ENCODE measurements at regions of chr11 and their contacts with region 1.

Region 1: GRCh38 chr11:118198370-118198769 is 21.9 kb upstream of the SCN2B start:
- DNase-seq: peak; percentile 89
- H3K4me3 Mint-ChIP-seq: no peak overlapping the region
- H3K27ac Mint-ChIP-seq: peak overlapping the region; percentile 63
- H3K4me1 Mint-ChIP-seq: peaks cover 11% of the 10 kb centered on the region
- H3K27me3 Mint-ChIP-seq: no peaks in the 10 kb centered on the region

Region 2: GRCh38 chr11:118098996-118099837 is 99.2 kb before region 1 on chr11:
- CTCF ChIA-PET with region 1: no interaction called
- DNase-seq: no peak
- H3K4me3 Mint-ChIP-seq: no peak overlapping the region
- H3K27ac Mint-ChIP-seq: no peak overlapping the region
- H3K4me1 Mint-ChIP-seq: no peaks in the 10 kb centered on the region
- H3K27me3 Mint-ChIP-seq: peaks cover 46% of the 10 kb centered on the region

Region 3: DNA sequence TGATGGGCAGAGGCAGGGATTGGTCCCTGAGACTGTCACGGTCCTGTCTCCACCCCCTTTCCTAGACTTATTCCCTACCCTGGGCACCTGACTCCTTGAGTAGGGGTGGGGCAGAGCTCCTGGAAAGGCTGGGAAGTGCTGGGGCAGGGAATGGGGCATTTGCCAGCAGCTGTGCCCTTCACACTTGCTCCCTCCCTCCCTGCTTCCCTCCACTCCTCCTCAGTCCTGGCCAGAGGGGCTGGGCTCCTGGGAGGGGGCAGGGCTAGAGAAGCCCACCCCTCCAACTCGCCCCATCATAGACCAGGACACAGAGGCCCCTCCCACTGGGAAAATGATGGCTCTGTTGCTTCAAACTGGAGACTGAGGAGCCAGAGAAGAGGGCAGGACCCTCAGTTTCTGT is 33.5 kb before region 1 on chr11:
- CTCF ChIA-PET with region 1: no interaction called
- DNase-seq: no peak
- H3K4me3 Mint-ChIP-seq: no peak overlapping the region
- H3K27ac Mint-ChIP-seq: no peak overlapping the region
- H3K4me1 Mint-ChIP-seq: no peaks in the 10 kb centered on the region
- H3K27me3 Mint-ChIP-seq: peaks cover 91% of the 10 kb centered on the region

Region 4: DNA sequence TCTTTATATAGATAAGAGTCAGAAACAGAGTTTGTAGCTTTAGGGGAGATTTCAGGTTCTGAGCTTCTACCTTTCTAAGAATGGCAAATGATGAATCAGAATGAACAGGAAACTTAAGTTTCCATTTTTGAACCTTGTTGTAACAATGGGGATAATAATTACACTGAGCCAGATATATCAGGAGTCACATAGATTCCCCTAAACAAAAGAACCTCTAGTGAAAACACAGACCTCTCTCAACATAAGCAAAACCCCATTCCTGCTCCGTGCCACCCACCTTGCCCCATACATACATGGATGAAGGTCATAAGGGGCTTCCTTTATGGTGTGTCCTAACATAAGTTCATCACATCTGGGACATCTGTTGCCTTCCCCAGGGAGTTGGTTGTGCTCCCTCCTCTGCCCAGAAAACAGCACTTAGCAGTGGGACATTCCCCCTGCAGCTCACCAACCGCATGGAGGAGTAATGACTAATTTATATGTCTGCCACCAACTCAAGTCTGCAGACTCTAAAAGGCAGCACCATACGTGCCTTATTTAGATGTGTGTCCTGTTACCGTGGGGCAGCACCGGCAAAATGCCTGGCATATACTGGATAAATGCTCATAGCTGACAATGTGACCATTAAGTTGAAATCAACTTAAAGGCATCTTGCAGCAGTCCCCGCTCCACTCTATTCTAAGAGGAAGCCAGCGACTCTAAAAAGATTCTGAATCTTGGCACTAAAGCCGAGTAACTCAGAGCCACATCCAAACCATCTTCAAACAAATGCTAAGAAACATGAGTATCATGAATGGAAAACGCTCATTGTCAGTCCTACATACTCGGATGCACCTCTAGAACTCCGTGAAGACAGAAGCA is 18.5 kb after region 1 on chr11:
- CTCF ChIA-PET with region 1: interaction called, 23 read pairs
- DNase-seq: peak; percentile 50
- H3K4me3 Mint-ChIP-seq: peak overlapping the region; percentile 68
- H3K27ac Mint-ChIP-seq: peak overlapping the region; percentile 94
- H3K4me1 Mint-ChIP-seq: peaks cover 99% of the 10 kb centered on the region
- H3K27me3 Mint-ChIP-seq: no peaks in the 10 kb centered on the region

Region 5: GRCh38 chr11:118240999-118241768 is 42.8 kb after region 1 on chr11:
- CTCF ChIA-PET with region 1: interaction called, 17 read pairs
- DNase-seq: peak; percentile 66
- H3K4me3 Mint-ChIP-seq: peak overlapping the region; percentile 52
- H3K27ac Mint-ChIP-seq: peak overlapping the region; percentile 94
- H3K4me1 Mint-ChIP-seq: peaks cover 75% of the 10 kb centered on the region
- H3K27me3 Mint-ChIP-seq: no peaks in the 10 kb centered on the region

Region 6: DNA sequence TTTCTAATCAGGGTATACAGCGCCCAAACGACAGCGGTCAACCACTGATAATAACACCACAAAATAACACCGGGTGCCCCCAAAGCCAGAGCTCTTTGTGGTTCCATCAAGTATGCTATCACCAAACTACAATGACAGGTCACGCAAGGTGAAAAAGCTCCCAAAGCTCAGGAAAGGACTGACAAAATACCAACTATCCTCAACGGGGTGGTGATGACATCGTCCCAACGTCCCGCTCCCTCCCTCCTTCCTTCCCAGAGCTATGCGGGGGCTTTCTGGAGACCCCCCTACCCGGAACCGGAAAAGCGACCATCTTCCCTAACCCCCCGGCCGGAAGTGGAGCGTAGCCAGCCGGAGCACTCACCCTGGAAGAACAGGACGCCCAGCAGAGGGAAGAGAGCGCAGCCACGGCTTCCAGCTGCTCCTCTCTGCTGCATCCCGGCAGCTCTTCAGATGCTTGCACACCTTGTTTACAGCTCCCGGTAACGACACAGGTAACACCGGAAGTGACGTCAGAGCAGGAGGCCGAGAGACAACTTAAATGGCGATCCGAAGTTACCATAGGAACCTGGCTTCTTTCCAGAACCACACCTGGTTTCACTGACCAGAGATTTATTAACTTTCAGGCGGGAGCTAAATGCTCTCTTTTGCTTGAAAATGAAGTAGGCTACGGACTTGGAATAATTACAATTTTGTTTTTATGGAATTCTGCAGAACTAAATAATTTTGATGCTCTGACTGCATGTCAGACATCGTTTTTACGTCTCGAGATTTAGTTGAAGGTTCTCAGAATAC is 53.7 kb after region 1 on chr11 and contains the start of gene MPZL3:
- CTCF ChIA-PET with region 1: interaction called, 22 read pairs
- DNase-seq: peak; percentile 89
- H3K4me3 Mint-ChIP-seq: peak within 1 kb of the TSS; percentile 92
- H3K27ac Mint-ChIP-seq: peak within 1 kb of the TSS; percentile 95
- H3K4me1 Mint-ChIP-seq: peaks cover 36% of the 10 kb centered on the region
- H3K27me3 Mint-ChIP-seq: no peaks in the 10 kb centered on the region

Region 7: DNA sequence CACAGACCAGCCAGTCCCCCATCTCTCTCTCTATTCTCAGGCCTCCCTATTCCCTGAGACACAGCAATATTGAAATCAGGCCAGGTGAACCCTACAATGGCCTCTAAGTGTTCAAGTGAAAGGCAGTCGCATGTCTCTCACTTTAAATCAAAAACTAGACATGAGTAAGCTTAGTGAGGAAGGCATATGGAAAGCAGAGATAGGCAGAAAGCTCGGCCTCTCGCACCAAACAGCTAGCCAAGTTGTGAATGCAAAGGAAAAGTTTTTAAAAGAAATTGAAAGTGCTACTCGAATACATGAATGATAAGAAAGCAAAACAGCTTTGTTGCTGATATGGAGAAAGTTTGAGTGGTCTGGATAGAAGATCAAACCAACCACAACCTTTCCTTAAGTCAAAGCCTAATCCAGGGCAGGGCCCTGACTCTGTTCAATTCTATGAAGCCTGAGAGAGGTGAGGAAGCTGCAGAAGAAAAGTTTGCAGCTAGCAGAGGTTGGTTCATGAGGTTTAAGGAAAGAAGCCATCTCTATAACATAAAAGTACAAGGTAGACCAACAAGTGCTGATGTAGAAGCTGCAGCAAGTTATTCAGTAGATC is 85.5 kb after region 1 on chr11:
- CTCF ChIA-PET with region 1: interaction called, 35 read pairs
- DNase-seq: no peak
- H3K4me3 Mint-ChIP-seq: no peak overlapping the region
- H3K27ac Mint-ChIP-seq: peak overlapping the region; percentile 79
- H3K4me1 Mint-ChIP-seq: peaks cover 39% of the 10 kb centered on the region
- H3K27me3 Mint-ChIP-seq: no peaks in the 10 kb centered on the region

Region 8: DNA sequence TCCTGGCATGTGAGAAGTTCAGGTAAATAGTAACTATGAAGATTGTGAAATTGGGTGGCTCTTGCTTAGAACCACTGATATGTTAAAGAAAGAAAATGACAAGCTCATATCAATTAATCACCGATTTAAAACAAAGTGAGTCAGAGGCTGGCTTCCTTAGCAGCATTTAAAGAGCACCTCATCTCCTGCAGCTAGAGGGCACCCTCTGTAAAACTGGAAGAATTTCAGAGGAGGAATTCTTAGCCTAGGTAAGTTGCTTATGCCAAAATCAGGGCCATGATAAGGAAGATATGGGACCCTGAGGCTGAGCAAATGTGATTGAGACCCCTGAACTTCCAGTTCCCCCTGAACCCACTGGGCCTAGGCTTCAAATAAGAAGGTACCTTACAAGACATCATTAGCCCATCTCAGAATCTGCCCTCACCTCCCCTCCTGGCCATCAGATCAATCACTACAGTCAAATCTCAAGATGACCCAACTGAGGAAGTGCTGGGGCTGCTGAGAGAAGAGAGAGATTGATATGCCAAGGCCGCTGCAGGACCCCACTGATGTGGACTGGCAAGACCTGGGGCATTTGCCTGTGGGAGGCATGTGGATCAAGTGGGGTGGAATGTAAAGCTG is 97.6 kb after region 1 on chr11:
- CTCF ChIA-PET with region 1: interaction called, 35 read pairs
- DNase-seq: peak; percentile 64
- H3K4me3 Mint-ChIP-seq: no peak overlapping the region
- H3K27ac Mint-ChIP-seq: no peak overlapping the region
- H3K4me1 Mint-ChIP-seq: peaks cover 13% of the 10 kb centered on the region
- H3K27me3 Mint-ChIP-seq: no peaks in the 10 kb centered on the region

Region 9: DNA sequence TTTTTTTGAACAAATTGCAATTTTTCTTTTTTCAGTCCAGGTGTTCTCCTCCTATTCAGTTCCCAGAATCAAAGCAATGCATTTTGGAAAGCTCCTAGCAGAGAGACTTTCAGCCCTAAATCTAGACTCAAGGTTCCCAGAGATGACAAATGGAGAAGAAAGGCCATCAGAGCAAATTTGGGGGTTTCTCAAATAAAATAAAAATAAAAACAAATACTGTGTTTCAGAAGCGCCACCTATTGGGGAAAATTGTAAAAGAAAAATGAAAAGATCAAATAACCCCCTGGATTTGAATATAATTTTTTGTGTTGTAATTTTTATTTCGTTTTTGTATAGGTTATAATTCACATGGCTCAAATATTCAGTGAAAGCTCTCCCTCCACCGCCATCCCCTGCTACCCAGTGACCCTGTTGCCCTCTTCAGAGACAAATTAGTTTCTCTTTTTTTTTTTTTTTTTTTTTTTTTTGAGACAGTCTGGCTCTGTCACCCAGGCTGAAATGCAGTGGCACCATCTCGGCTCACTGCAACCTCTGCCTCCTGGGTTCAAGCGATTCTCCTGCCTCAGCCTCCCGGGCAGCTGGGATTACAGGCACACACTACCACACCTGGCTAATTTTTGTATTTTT is 154.8 kb after region 1 on chr11:
- CTCF ChIA-PET with region 1: interaction called, 10 read pairs
- DNase-seq: no peak
- H3K4me3 Mint-ChIP-seq: no peak overlapping the region
- H3K27ac Mint-ChIP-seq: peak overlapping the region; percentile 80
- H3K4me1 Mint-ChIP-seq: peaks cover 31% of the 10 kb centered on the region
- H3K27me3 Mint-ChIP-seq: no peaks in the 10 kb centered on the region